ENCODE measurements at regions of chr11 and their contacts with region 1.

Region 1: GRCh38 chr11:75388386-75389275 is 10.7 kb upstream of the RPS3 start:
- DNase-seq: peak; percentile 59
- H3K4me3 ChIP-seq: no peak overlapping the region
- H3K27ac ChIP-seq: no peak overlapping the region
- H3K4me1 ChIP-seq: no peaks in the 10 kb centered on the region
- H3K27me3 ChIP-seq: no peaks in the 10 kb centered on the region
- CTCF ChIP-seq: peak; percentile 61 to 79 (median 72)
- POLR2A ChIP-seq: no peak

Region 2: GRCh38 chr11:75280227-75280701 is 108.4 kb before region 1 on chr11:
- intact Hi-C with region 1: loop called (anchors 1 kb)
- DNase-seq: peak; percentile 65
- H3K4me3 ChIP-seq: no peak overlapping the region
- H3K27ac ChIP-seq: no peak overlapping the region
- H3K4me1 ChIP-seq: no peaks in the 10 kb centered on the region
- H3K27me3 ChIP-seq: no peaks in the 10 kb centered on the region
- CTCF ChIP-seq: peak; percentile 95 to 98 (median 97)
- POLR2A ChIP-seq: no peak

Region 3: GRCh38 chr11:75328426-75329277 is 60.0 kb before region 1 on chr11:
- intact Hi-C with region 1: loop called (anchors 1 kb)
- DNase-seq: peak; percentile 82
- H3K4me3 ChIP-seq: no peak overlapping the region
- H3K27ac ChIP-seq: peak overlapping the region; percentile 64 to 72
- H3K4me1 ChIP-seq: peaks cover 22% of the 10 kb centered on the region
- H3K27me3 ChIP-seq: no peaks in the 10 kb centered on the region
- CTCF ChIP-seq: peak; percentile 58 to 86 (median 80)
- POLR2A ChIP-seq: no peak

Region 4: DNA sequence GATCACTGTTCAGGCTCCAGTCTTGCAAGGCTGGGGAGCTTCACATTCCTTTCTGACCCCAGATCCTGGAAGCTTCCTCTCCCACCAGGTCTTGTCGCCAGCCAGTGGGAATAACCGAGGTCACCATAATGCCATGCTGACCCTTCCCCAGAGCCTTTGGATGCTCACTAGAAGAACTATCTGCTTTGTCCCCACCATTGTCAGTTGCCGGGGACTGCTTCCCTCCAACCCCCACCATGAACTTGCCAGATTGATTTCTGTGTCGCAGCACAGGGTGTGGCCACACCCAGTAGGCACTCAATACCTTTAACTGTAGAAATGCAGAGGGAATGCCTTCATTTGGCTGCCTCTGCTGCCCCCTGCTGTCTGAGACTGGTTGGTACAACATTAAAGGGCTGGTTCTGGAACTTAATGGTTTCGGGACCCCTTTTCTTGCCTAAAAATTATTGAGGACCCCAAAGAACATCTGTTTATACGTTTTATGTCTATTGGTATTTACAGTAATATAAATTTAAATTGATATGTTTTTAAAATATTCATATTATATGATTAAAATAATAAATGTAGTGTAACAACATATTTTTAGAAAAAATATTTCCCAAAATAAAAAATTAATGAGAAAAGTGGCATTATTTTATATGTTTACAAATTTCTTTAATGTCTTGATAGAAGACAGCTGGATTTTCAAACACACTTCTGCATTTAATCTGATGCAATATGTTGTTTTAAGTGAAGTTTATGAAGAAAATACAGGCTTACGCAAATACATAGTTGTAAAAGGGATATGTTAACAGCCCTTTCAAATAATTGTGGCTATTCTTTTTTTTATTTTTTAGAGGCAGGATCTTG is 143.8 kb after region 1 on chr11:
- intact Hi-C with region 1: loop called (anchors 5 kb)
- DNase-seq: peak; percentile 45
- H3K4me3 ChIP-seq: no peak overlapping the region
- H3K27ac ChIP-seq: no peak overlapping the region
- H3K4me1 ChIP-seq: no peaks in the 10 kb centered on the region
- H3K27me3 ChIP-seq: no peaks in the 10 kb centered on the region
- CTCF ChIP-seq: peak; percentile 87 to 93 (median 91)
- POLR2A ChIP-seq: no peak

Region 5: DNA sequence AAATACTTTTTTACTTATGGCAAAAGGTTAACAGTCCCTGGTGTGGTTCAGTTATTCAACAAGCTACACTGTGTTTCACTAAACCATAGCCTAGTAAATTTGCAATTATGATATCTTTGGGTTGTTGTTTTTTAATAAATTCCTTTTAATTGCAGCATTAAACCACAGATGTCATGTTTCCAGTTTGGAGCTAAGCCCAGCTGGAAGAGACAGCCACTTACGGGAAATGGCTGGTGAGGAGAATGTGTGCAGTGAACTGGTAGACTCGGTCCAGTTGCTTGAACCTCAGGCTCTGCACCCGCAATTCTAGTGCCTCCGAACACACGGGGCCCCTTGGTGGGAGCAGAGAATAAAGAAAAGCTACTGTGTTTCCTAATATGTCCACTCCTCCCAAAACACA is 746.9 kb after region 1 on chr11:
- intact Hi-C with region 1: no loop called
- DNase-seq: no peak
- H3K4me3 ChIP-seq: no peak overlapping the region
- H3K27ac ChIP-seq: no peak overlapping the region
- H3K4me1 ChIP-seq: peaks cover 2% of the 10 kb centered on the region
- H3K27me3 ChIP-seq: no peaks in the 10 kb centered on the region
- CTCF ChIP-seq: no peak
- POLR2A ChIP-seq: no peak